Cardiac septum (tissue), 1 donor: ENCODE measurements at regions of chr2 and their contacts with region 1.

Region 1: GRCh38 chr2:191245046-191245868 is at the start of gene MYO1B:
- DNase-seq: peak; percentile 84
- total RNA-seq, gene MYO1B: 20.8 TPM

Region 2: DNA sequence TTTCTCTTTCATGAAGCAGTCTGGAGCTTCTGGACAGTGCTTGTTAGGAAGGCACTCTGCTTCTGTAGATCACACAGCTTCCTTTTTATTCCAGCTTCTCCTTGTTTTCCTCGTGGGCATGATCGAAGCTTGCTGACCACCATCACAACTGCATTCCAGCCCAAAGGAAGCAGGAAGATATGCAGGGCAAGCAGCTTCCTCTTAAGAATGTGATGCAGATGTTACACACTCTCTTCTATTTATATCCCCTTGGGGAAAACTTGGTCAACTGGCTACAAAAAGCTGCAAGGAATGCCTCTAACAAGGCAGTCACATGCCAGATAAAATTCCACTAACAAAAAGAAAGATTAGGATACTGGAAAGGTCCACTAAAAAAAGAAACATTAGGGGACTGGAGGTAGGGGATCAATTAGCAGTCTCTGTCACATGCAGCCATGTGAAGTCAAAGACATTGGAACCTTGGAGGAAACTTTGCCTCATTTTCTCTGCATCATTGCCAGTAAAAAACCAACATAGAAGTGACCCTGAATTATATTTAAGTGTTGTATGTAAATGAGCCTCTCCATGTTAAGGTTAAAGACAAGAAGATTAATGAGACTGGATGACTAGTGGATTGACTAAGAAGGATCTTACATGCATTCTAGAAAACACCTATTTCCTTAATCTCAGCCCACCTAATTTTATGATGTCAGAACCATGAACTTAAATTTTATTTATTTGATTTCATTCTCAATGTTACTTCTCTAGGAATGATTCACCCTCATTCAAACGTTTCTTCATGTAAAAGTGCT is 498.1 kb before region 1 on chr2:
- intact Hi-C with region 1: no loop called
- DNase-seq: no peak

Region 3: DNA sequence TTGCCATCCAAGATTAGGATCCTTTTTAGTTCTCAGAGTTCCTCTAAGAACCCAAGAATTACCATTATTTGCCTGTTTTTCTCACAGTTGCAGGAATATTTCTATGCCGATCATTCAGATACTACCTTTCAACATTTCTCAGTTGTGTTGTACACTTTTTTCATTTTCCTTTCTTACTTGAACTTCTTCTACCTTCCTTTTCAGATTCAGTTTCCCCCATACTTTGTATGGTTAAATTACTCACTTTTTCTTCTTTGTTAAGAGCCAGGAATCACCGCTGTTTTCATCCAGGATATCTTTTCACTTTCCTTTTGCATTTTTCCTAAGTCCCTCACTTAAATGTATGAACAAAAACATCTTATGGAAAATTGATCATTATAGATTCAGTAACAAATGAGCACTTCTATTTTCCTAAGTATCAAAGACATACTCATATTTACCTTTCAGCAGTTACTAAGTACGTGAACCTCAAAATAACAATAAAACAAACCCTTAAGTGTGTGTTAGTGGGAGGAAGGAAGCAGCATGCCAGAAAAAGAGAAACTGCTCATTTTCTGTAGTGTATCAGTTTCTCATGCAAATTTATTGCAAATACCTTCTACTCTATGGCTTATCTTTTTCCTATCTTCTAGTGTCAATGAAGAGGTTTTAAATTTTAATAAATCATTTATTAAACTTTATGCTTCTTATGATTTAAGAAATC is 166.9 kb before region 1 on chr2:
- intact Hi-C with region 1: no loop called
- DNase-seq: no peak

Region 4: DNA sequence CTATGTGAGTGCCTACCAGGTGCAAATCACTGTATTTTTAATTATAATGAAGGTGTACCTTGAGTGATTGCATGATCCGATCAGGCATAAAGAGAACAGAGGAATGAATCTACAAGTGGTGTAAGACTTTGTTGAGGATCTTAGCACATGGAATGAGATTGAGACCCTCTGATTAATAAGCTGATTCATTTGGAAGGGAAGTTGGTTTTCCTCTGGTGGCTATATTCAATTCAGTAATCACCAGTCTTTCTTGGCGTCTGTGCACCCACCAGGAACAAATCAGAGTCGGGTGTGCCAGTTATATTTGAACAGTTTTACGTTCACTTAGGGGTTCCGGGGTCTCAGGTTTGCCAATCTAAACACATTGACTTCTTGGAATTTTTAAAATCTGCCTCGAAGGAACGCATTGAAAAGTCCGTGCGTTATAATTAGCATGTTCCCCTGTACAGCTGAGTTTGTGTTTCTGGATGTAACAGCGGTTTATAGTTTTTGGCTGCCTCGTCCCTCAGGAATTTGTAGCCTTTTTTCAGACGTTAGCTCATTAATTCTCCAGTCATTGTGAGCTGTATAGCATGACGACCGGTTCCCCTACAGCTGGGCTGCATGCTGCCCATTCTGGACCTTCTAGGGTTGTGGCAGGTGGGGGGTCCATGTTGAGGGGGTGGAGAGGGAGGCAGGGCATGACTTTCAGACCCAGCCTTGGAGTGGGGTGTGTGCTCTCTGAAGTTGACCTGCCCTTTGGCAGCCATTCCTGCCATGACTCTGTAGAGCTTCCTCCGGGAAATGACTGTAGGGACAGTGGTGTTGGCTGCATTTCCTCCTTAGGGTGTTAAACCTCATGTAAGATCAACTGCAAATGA is 20.3 kb after region 1 on chr2:
- intact Hi-C with region 1: loop called (anchors 2 kb)
- DNase-seq: no peak

Region 5: DNA sequence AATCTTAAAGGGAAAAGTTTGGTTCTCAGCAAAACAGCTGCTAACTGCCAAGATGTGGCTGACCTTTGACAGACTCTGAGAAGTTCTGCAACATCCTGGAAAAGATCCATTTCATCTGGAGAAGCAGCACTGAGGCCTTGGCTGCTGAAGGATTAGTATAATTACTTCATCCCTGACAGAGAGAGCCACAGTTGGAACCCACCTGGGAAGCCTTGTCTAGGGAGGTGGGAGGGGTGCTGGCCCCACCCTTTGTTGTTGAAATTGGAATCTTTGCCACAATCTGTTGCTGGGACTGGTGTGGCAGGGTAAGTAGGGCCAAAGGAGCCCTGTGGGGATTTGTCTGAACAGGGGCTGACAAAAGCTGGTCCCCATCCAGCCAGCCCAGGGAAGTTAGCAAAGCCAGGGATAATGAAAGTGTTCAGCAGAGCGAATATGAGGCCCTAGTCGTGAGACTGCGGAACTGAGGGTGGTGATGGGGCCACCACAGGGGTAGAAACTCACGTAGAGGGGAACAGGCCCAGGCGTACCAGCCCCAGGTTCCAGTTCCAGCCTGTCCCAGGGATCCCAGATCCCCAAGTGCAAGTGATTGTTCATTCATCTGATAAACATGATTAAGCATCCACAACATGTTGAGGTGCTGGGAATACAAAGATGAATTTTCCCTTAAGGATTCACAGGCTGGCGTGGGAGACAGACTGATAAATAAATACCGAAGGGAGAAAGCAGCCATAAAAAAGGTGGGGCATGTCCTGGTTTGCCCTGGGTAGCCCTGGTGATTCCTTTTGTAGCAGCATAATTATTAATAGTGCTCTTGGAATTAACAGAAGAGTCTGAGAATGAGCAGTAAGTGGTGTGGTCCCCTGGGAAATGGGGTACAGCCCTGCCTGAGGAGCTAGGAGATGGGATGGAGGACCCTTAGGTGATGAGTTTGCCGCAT is 60.0 kb after region 1 on chr2:
- intact Hi-C with region 1: loop called (anchors 5 kb)
- DNase-seq: no peak

Region 6: GRCh38 chr2:191386938-191387536 is 141.8 kb after region 1 on chr2:
- intact Hi-C with region 1: loop called (anchors 5 kb)
- DNase-seq: no peak